Activated CD4-positive, alpha-beta memory T cell treated with anti-CD3 and anti-CD28 coated beads for 36 hours (primary cell): ENCODE measurements at regions of chr13 and their contacts with region 1.

Region 1: DNA sequence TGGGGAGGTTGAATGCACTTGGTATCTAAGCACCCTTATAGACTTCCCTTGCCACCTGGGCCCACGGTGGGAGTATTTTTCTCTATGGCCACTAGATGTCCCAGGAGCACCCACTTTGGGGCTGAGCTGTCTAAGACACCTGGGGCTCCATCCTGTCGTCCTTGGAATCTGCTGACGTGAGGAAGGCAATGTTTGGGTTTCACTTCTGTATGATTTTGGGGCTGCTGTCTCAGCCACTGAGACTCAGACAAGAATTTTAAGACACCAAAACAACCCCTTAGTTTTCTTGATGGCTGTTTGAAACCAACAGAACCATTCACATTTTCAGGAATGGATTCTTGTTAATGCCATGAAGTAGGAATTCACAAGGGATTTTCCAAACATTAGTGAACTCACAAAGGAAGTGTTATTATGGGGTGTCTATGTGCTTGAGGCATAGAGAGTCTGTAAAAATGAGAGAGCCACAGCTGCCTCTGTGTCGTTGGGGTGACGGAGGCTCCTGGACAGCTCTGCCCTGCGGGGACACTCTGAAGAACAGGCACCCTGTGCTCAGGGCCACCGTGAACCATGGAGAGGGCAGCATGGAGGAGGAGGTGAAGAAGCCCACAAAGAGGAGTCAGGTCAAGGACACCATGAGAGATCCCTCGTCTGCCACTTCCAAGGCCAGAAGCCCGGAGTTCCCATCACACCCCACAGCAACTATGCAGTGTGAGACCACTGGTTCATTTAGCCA is 106.8 kb upstream of the SPATA13 start:
- DNase-seq: peak; percentile 78
- H3K4me3 Mint-ChIP-seq: no peak overlapping the region
- H3K27ac Mint-ChIP-seq: no peak overlapping the region
- H3K4me1 Mint-ChIP-seq: peaks cover 4% of the 10 kb centered on the region
- H3K27me3 Mint-ChIP-seq: peaks cover 27% of the 10 kb centered on the region

Region 2: GRCh38 chr13:23440821-23441618 is 612.7 kb before region 1 on chr13:
- CTCF ChIA-PET with region 1: no interaction called
- POLR2A ChIA-PET with region 1: no interaction called
- intact Hi-C with region 1: no loop called
- DNase-seq: no peak
- H3K4me3 Mint-ChIP-seq: no peak overlapping the region
- H3K27ac Mint-ChIP-seq: no peak overlapping the region
- H3K4me1 Mint-ChIP-seq: no peaks in the 10 kb centered on the region
- H3K27me3 Mint-ChIP-seq: peaks cover 2% of the 10 kb centered on the region

Region 3: DNA sequence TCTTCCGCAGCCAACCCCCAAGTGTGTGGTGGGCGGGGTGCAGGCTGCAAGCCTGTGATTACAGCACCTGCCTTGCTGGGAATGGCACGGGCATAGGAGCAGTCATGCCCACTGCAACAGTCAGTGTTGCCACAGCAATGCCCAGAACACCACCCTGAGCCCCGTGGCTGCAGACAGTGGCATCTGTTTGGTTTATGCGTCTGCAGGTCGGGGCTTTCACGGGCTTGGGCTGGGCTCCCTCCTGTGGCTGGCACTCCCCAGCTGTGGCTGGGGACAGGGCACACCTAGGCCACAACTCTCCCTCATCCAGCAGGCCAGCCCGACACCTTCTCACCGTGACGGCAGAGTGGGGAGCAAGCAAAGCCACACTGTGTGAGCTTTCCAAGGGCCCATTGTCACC is 41.0 kb before region 1 on chr13:
- CTCF ChIA-PET with region 1: no interaction called
- POLR2A ChIA-PET with region 1: no interaction called
- intact Hi-C with region 1: no loop called
- DNase-seq: no peak
- H3K4me3 Mint-ChIP-seq: no peak overlapping the region
- H3K27ac Mint-ChIP-seq: no peak overlapping the region
- H3K4me1 Mint-ChIP-seq: no peaks in the 10 kb centered on the region
- H3K27me3 Mint-ChIP-seq: no peaks in the 10 kb centered on the region

Region 4: DNA sequence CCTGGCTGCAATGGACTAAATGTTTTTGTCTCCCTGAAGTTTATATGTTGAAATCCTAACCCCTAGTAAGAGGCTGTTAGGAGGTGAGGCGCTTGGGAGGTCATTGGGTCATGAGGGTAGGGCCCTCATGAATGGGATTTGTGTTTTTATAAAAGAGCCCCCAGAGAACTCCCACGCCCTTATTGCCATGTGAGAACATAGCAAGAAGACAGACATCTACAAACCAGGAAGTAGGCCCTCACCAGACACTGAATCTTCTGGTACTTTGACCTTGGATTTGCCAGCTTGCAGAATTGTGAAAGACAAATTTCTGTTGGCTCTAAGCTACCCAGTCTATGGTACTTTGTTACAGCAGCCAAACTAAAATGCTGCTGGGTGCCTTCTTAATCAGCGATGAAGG is 10.7 kb after region 1 on chr13:
- CTCF ChIA-PET with region 1: interaction called, 10 read pairs
- POLR2A ChIA-PET with region 1: no interaction called
- intact Hi-C with region 1: no loop called
- DNase-seq: no peak
- H3K4me3 Mint-ChIP-seq: no peak overlapping the region
- H3K27ac Mint-ChIP-seq: no peak overlapping the region
- H3K4me1 Mint-ChIP-seq: peaks cover 9% of the 10 kb centered on the region
- H3K27me3 Mint-ChIP-seq: peaks cover 13% of the 10 kb centered on the region

Region 5: GRCh38 chr13:24127038-24127643 is 73.5 kb after region 1 on chr13:
- CTCF ChIA-PET with region 1: interaction called, 4 read pairs
- POLR2A ChIA-PET with region 1: no interaction called
- intact Hi-C with region 1: loop called (anchors 10 kb)
- DNase-seq: peak; percentile 70
- H3K4me3 Mint-ChIP-seq: no peak overlapping the region
- H3K27ac Mint-ChIP-seq: no peak overlapping the region
- H3K4me1 Mint-ChIP-seq: peaks cover 25% of the 10 kb centered on the region
- H3K27me3 Mint-ChIP-seq: peaks cover 60% of the 10 kb centered on the region

Region 6: GRCh38 chr13:24160454-24161009 is 106.8 kb after region 1 on chr13 and contains the start of gene SPATA13:
- CTCF ChIA-PET with region 1: interaction called, 11 read pairs
- POLR2A ChIA-PET with region 1: no interaction called
- intact Hi-C with region 1: no loop called
- DNase-seq: peak; percentile 94
- H3K4me3 Mint-ChIP-seq: peak within 1 kb of the TSS; percentile 83
- H3K27ac Mint-ChIP-seq: no peak within 1 kb of the TSS
- H3K4me1 Mint-ChIP-seq: peaks cover 13% of the 10 kb centered on the region
- H3K27me3 Mint-ChIP-seq: peaks cover 11% of the 10 kb centered on the region
- total RNA-seq, gene SPATA13: 50.3 to 50.8 TPM